RWPE1 (cell line): ENCODE measurements at regions of chr3 and their contacts with region 1.

Region 1: DNA sequence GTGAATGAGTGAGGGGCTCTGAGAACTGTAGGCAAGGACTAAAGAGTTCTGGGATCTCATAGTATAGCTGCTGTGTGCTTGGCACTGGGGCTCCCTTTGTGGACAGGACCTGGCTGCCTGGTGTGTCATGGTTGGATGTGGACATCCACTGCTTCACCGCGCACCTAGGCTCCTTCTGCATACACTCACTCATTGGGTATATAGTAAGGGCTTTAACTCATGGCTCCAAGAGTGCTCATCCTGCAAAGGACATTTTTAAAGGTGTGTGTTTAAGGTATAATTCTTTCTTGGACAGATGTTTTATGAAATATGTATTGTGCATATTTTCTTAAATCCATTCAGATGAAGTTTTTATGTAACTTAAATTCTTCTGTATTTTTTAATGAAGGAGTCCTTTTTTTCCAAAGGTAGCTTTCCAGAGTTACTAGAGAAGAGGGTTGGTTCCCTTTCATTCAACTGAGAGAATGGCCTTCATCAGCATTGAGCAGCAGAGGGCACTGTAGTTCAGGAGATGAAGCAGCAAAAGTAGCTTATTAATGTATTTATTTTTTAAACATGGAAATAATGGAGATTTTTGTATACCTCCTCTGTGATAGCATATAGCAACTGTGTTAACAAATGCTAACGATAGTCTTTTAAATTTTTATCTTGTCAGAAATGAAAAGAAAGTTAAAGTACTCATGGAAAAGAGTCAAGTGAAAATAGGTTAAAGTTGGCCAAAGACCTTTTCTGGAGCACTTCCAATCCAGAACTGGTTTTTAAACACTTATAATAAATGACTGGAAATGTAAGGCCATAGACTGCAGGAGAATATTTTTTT is 25.2 kb downstream of the OXNAD1 start:
- DNase-seq: peak; percentile 25
- H3K27ac ChIP-seq: no peak overlapping the region
- CTCF ChIP-seq: peak; percentile 74

Region 2: DNA sequence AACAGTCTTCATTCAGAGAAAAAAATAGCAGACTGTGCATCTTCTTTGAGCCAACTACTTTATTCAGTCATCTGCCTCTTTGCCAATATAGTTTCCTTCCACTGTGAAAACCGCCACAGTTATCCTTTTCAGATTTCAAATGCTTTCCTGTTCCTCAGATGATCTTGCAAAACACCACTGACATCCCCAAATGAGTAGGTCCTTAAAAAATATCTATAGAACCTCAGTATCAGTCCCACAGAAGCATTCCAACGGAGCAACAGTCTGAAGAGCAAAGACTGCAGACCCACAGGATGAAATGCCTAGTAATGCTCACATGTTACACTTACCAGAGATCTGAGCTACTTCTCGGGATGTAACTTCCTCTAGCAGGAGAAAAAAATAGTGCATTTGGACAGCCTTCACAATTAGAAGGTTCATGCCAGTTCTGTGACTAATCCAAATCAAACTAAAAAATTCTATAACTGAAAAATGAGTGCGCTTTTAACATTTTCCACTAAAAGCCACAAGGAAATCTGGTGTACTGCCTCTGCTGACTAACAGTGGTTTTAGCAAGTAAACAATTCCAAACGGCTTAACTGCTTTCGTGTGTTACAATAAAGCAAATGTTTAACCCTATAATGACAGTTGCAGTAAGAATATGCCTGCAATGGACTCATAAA is 492.4 kb before region 1 on chr3 and contains the start of gene ANKRD28:
- CTCF ChIA-PET with region 1: no interaction called
- POLR2A ChIA-PET with region 1: no interaction called
- DNase-seq: peak; percentile 42
- H3K27ac ChIP-seq: no peak within 1 kb of the TSS
- CTCF ChIP-seq: peak; percentile 28; the same call in 1 of the 2 replicates

Region 3: GRCh38 chr3:16550676-16551341 is 260.6 kb after region 1 on chr3:
- CTCF ChIA-PET with region 1: interaction called, 19 read pairs
- POLR2A ChIA-PET with region 1: no interaction called
- DNase-seq: peak; percentile 67
- H3K27ac ChIP-seq: no peak overlapping the region
- CTCF ChIP-seq: peak; percentile 79